ENCODE measurements at regions of chr16 and their contacts with region 1.

Region 1: GRCh38 chr16:66894948-66895688 is 14.8 kb downstream of the PDP2 start:
- DNase-seq: peak; percentile 60
- H3K4me3 ChIP-seq: no peak overlapping the region
- H3K27ac ChIP-seq: no peak overlapping the region
- H3K4me1 ChIP-seq: peaks cover 28% of the 10 kb centered on the region
- H3K27me3 ChIP-seq: no peaks in the 10 kb centered on the region
- CTCF ChIP-seq: peak; percentile 95

Region 2: GRCh38 chr16:66905633-66906539 is 10.8 kb after region 1 on chr16:
- CTCF ChIA-PET with region 1: no interaction called
- dilution Hi-C with region 1: no loop called
- in situ Hi-C with region 1: no loop called
- intact Hi-C with region 1: no loop called
- DNase-seq: peak; percentile 34
- H3K4me3 ChIP-seq: no peak overlapping the region
- H3K27ac ChIP-seq: no peak overlapping the region
- H3K4me1 ChIP-seq: peaks cover 10% of the 10 kb centered on the region
- H3K27me3 ChIP-seq: no peaks in the 10 kb centered on the region
- CTCF ChIP-seq: no peak

Region 3: DNA sequence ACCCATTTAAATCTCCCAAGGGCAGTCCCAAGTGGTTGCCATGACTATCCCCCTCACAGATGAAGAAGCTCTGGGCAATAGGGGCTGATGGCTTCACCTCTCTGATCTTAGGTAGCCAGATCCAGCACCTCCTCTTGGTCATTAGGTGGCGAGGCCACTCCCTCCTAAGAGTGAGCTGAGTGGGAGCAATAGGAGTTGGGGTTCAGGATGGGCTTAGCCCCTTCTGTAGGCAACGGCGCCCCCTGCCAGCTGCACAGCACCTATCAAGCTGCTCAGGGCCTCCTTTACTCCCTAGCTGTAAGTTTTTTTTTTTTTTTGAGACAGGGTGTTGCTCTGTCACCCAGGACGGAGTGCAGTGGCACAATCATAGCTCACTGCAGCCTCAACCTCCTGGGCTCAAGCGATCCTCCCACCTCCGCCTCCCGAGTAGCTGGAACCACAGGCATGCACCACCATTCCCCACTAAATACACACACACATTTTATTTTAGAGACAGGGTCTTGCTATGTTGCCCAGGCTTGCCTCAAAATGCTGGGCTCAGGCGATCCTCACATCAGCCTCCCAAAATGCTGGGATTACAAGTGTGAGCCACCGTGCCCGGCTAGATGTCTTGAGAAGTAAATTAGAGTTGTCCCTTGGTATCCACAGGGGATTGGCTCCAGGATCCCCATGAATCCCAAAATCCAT is 33.7 kb after region 1 on chr16:
- CTCF ChIA-PET with region 1: interaction called, 14 read pairs
- dilution Hi-C with region 1: no loop called
- in situ Hi-C with region 1: loop called (anchors 5 kb)
- intact Hi-C with region 1: loop called (anchors 1 kb)
- DNase-seq: peak; percentile 32
- H3K4me3 ChIP-seq: no peak overlapping the region
- H3K27ac ChIP-seq: peak overlapping the region; percentile 89
- H3K4me1 ChIP-seq: peaks cover 48% of the 10 kb centered on the region
- H3K27me3 ChIP-seq: no peaks in the 10 kb centered on the region
- CTCF ChIP-seq: peak; percentile 44 to 72

Region 4: DNA sequence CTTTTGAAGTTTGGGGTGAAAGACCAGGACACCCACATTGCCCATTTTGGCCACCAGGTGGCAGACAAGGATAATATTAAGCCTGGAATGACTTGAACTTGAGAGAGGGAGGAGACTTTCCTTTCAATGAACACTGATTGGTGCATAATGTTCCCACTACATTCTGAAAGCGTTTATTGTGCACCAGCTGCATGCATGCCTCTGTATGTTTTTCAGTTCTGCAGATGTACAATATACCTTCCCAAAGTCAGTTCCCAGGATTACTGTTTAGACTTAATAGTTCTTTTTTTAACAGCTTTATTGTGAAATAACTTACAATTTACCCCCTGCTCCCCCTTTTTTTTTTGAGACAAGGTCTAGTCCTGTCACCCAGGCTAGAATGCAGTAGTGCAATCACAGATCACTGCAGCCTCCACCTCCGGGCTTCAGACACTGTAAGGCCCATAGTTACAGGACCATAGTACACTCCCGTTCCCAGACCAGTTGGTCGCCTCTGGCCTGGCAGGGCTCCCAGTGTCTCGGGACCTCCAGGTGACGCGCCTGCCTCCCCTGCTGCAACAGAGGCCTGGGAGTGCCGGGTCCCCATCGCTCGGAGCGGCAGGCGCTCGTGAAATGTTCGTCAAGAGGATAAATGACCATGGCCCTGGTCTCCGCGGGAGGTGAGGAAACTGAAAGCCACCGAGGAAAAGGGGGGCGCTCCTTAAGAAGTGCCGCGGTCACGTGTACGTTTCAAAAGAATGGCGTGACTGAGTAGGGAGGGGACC is 52.4 kb after region 1 on chr16:
- CTCF ChIA-PET with region 1: no interaction called
- dilution Hi-C with region 1: no loop called
- in situ Hi-C with region 1: no loop called
- intact Hi-C with region 1: loop called (anchors 1 kb)
- DNase-seq: peak; percentile 78
- H3K4me3 ChIP-seq: peak overlapping the region; percentile 66 to 69 (median 68)
- H3K27ac ChIP-seq: peak overlapping the region; percentile 49
- H3K4me1 ChIP-seq: peaks cover 22% of the 10 kb centered on the region
- H3K27me3 ChIP-seq: no peaks in the 10 kb centered on the region
- CTCF ChIP-seq: peak; percentile 84 to 94

Region 5: GRCh38 chr16:66961065-66961744 is 66.1 kb after region 1 on chr16 and contains the start of gene CES3:
- CTCF ChIA-PET with region 1: no interaction called
- dilution Hi-C with region 1: loop called (anchors 5 kb)
- in situ Hi-C with region 1: no loop called
- intact Hi-C with region 1: no loop called
- DNase-seq: peak; percentile 41
- H3K4me3 ChIP-seq: no peak within 1 kb of the TSS
- H3K27ac ChIP-seq: no peak within 1 kb of the TSS
- H3K4me1 ChIP-seq: peaks cover 3% of the 10 kb centered on the region
- H3K27me3 ChIP-seq: no peaks in the 10 kb centered on the region
- CTCF ChIP-seq: peak; percentile 77 to 94
- total RNA-seq, gene CES3: 1.3 to 3.5 TPM

Region 6: DNA sequence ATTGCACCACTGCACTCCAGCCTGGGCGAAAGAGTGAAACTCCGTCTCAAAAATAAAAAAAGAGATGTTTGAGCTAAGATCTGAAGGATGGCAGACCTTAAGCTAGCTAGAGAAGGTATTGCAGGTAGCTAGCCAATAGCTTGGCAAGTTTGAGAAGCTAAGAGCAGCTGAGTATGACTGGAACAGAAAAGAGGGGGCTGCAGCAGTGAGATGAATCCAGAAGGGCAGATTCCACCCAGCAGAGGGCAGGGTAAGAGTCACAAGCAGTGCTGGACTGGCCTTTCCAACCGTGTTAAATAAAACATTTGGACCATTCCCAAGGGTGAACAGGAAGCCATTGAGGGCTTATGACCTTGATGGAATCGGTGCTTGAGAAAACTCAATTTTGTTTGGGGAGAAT is 208.9 kb after region 1 on chr16:
- CTCF ChIA-PET with region 1: no interaction called
- dilution Hi-C with region 1: no loop called
- in situ Hi-C with region 1: no loop called
- intact Hi-C with region 1: loop called (anchors 5 kb)
- DNase-seq: no peak
- H3K4me3 ChIP-seq: no peak overlapping the region
- H3K27ac ChIP-seq: no peak overlapping the region
- H3K4me1 ChIP-seq: peaks cover 5% of the 10 kb centered on the region
- H3K27me3 ChIP-seq: no peaks in the 10 kb centered on the region
- CTCF ChIP-seq: peak; percentile 34 to 40